T-cell (primary cell): ENCODE measurements at regions of chr6 and their contacts with region 1.

Region 1: DNA sequence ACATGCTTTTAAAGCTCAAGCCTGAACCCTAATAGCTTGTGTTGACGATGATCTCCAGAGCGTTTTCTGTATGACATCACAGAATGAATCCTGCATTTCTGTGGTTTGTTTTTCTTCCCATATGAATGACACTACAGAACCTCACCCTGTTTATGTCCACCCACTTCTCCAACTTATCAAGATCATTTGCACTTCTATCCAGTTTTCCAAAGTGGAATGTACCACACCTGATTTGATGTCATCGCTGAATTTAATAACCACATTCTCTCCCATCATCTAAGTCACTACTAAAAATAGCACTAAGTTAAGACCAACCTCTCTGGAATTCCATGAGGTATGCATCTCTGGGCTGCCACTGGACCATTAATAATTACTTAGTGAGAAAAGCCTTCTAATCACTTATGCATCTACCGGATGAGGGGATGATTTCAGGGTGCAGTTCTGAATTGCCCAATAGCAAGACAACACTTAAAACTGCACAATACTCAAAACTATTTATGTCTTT is 33.3 kb upstream of the CITED2 start:
- DNase-seq: no peak
- ATAC-seq: no peak
- H3K4me3 ChIP-seq: no peak overlapping the region
- H3K4me3 Mint-ChIP-seq: no peak overlapping the region
- H3K27ac ChIP-seq: no peak overlapping the region
- H3K27ac Mint-ChIP-seq: no peak overlapping the region
- H3K4me1 ChIP-seq: no peaks in the 10 kb centered on the region
- H3K4me1 Mint-ChIP-seq: no peaks in the 10 kb centered on the region
- H3K27me3 ChIP-seq: peaks cover 0 to 3% of the 10 kb centered on the region in 2 experiments
- H3K27me3 Mint-ChIP-seq: peaks cover 0 to 2% of the 10 kb centered on the region in 2 donors

Region 2: DNA sequence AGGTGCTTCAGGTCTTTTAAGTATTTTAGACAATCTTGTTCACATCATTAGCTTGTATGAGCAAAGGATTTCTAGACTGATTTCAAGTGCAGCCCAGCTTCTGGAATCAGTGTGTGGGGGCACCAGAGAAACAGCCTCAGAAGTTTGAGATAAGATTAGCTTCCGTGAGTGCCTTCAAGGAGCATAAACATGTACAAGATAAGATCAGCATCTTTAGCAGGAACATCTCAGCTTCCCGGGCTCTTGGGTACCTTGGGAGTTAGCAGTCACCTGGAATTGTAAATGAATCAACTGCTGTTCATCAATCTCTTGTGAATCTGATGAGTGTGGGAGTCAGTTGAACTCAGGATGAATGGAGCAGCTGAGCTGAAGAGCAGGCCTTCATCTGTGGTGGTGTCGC is 21.4 kb before region 1 on chr6:
- CTCF ChIA-PET with region 1: no interaction called
- POLR2A ChIA-PET with region 1: interaction called in 1 of 2 experiments, 10 read pairs
- DNase-seq: no peak
- ATAC-seq: no peak
- H3K4me3 ChIP-seq: no peak overlapping the region
- H3K4me3 Mint-ChIP-seq: no peak overlapping the region
- H3K27ac ChIP-seq: no peak overlapping the region
- H3K27ac Mint-ChIP-seq: no peak overlapping the region
- H3K4me1 ChIP-seq: no peaks in the 10 kb centered on the region
- H3K4me1 Mint-ChIP-seq: no peaks in the 10 kb centered on the region
- H3K27me3 ChIP-seq: no peaks in the 10 kb centered on the region
- H3K27me3 Mint-ChIP-seq: no peaks in the 10 kb centered on the region